Uterus (tissue), 4 donors: ENCODE measurements at regions of chr15 and their contacts with region 1.

Region 1: DNA sequence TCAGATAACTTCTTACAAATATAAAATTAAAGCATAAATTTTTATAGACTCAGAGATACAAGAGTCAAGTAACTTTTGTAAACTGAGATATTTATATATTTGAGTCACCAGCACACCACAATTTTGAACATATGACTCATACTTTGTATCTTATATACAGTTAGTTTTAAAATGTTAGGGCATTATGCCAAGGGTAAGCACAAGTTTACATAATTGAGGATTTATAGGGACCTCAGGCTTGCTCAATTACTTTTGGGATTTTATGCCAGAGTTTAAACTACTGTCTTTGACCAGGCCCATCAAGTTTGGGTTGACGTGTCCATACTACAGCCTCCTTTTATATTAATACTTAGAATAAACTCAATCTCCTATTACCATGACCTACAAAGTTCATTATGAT is 7.4 kb upstream of the FGF7 start:
- DNase-seq: no peak
- H3K4me3 ChIP-seq: no peak overlapping the region
- H3K27ac ChIP-seq: no peak overlapping the region
- H3K4me1 ChIP-seq: no peaks in the 10 kb centered on the region
- H3K27me3 ChIP-seq: no peaks in the 10 kb centered on the region
- CTCF ChIP-seq: no peak
- POLR2A ChIP-seq: no peak

Region 2: DNA sequence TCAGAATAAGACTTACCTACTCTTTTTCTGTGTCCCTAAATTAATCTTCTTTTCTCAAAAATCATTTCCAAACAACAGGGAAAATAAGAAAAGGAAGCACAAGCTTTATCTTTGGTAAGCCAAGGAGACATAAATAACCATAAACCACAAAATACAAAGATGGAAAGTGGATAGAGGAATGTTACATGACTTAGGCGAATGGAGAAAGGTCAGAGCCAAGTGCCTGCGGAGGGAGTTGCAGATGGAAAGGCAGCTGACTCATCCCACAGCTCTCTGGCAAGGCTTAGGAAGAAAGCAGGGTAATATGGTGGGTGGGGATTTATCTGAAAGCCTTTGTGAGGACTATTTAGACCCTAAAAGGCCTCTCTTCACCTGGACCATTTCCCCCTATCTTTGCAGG is 172.8 kb before region 1 on chr15:
- intact Hi-C with region 1: loop called (anchors 10 kb)
- DNase-seq: peak in 1 of 2 donors; percentile 24
- H3K4me3 ChIP-seq: no peak overlapping the region
- H3K27ac ChIP-seq: peak overlapping the region in 1 of 2 donors; percentile 31
- H3K4me1 ChIP-seq: peaks cover 0 to 5% of the 10 kb centered on the region in 2 donors
- H3K27me3 ChIP-seq: no peaks in the 10 kb centered on the region
- CTCF ChIP-seq: no peak
- POLR2A ChIP-seq: no peak